PC-3 (cell line): ENCODE measurements at regions of chr20 and their contacts with region 1.

Region 1: GRCh38 chr20:9407805-9408421 is 106.5 kb upstream of the LAMP5 start:
- DNase-seq: peak; percentile 92
- ATAC-seq: peak; percentile 82
- H3K4me3 ChIP-seq: no peak overlapping the region
- H3K27ac ChIP-seq: peak overlapping the region; percentile 73; the same call in 1 of the 2 replicates
- H3K4me1 ChIP-seq: peaks cover 25% of the 10 kb centered on the region
- H3K27me3 ChIP-seq: no peaks in the 10 kb centered on the region
- CTCF ChIP-seq: peak; percentile 95

Region 2: DNA sequence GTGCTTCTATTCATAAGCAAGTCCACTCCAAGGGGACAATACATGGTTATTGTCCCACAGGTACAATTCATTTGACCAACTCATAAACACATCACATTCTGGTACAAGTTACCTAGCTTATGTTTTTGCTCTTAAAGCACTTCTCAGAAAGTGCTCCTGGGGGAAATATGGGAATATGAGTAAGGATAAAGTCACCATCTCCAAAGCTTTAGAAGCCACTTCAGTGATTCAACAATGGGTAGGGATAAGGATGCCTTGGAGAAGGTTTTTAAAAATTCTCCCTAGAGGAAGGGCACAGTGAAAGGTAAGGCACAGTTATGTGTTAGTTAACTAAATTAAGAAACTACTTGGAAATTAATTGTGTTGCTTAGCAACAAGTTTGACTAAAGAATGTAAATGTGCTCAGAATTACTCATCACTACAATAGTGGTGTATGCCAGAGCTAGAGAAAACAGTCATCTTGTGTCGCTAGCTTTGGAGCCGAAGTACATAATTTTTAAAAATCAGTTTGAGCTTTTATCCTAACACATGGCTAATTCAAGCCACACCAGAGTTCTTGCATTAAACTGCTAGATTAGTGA is 67.0 kb after region 1 on chr20:
- CTCF ChIA-PET with region 1: no interaction called
- POLR2A ChIA-PET with region 1: interaction called, 3 read pairs
- intact Hi-C with region 1: loop called (anchors 5 kb)
- DNase-seq: peak; percentile 60
- ATAC-seq: peak; percentile 74
- H3K4me3 ChIP-seq: no peak overlapping the region
- H3K27ac ChIP-seq: no peak overlapping the region
- H3K4me1 ChIP-seq: peaks cover 8% of the 10 kb centered on the region; the same call in 1 of the 2 replicates
- H3K27me3 ChIP-seq: no peaks in the 10 kb centered on the region
- CTCF ChIP-seq: no peak

Region 3: DNA sequence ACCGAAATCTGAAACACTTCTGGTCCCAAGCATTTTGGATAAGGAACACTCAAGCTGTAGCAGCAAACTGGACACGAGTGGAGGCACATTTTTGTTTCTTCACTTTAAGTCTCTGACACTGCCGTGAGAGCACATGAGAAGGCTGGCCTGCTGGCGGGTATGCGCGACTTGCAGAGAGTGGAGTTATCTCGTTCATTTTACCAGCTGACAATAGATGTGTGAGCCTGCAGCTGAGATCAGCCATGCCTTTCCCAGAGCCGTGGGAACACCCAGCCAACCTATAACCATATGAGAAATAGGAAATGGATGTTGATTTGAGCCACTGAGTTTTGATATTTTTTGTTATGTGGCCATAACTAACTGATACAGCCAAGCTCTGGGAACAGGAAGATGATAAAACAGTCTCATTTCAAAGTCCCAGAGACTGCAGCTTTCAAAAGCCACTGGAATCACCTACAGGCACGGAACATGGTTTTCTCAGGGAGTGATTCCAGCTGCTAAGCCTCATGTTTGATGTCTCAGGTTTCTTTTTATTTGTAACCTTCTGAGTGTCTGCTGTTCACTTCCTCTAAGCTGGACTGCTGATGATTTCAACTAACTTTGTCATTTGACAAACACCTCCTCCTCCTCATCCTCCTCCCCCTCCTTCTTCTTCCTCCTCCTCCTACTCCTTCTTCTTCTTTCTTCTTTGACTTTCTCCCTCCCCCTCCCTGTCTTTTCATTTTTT is 77.9 kb after region 1 on chr20:
- CTCF ChIA-PET with region 1: no interaction called
- POLR2A ChIA-PET with region 1: no interaction called
- intact Hi-C with region 1: loop called (anchors 2 kb)
- DNase-seq: peak; percentile 68
- ATAC-seq: peak; percentile 88
- H3K4me3 ChIP-seq: no peak overlapping the region
- H3K27ac ChIP-seq: peak overlapping the region; percentile 44
- H3K4me1 ChIP-seq: peaks cover 18% of the 10 kb centered on the region
- H3K27me3 ChIP-seq: no peaks in the 10 kb centered on the region
- CTCF ChIP-seq: no peak

Region 4: GRCh38 chr20:9523636-9524035 is 115.7 kb after region 1 on chr20:
- CTCF ChIA-PET with region 1: no interaction called
- POLR2A ChIA-PET with region 1: no interaction called
- intact Hi-C with region 1: no loop called
- DNase-seq: no peak
- ATAC-seq: no peak
- H3K4me3 ChIP-seq: no peak overlapping the region
- H3K27ac ChIP-seq: no peak overlapping the region
- H3K4me1 ChIP-seq: no peaks in the 10 kb centered on the region
- H3K27me3 ChIP-seq: no peaks in the 10 kb centered on the region
- CTCF ChIP-seq: no peak

Region 5: DNA sequence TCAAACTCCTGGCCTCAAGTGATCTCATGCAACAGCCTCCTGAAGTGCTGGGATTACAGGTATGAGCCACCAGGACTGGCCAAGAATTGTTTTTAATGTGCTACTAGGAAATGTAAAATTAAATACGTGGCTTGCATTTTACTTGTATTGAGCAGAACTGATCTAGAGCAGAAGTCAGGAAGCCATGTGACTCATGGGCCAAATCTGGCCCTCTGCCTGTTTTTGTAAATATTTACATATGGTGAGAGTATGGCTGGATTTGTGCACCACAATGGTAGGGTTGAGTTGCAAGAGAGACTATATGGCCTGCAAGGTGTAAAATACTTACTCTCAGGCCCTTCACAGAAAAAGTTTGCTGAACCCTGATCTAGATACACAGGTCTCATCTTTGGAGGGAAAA is 182.3 kb after region 1 on chr20:
- CTCF ChIA-PET with region 1: no interaction called
- POLR2A ChIA-PET with region 1: no interaction called
- intact Hi-C with region 1: loop called (anchors 5 kb)
- DNase-seq: peak; percentile 99
- ATAC-seq: peak; percentile 82
- H3K4me3 ChIP-seq: no peak overlapping the region
- H3K27ac ChIP-seq: peak overlapping the region; percentile 62
- H3K4me1 ChIP-seq: peaks cover 53% of the 10 kb centered on the region
- H3K27me3 ChIP-seq: no peaks in the 10 kb centered on the region
- CTCF ChIP-seq: no peak